Adrenal gland (tissue), 19 donors: ENCODE measurements at regions of chr3 and their contacts with region 1.

Region 1: GRCh38 chr3:170811928-170812591 is 57.9 kb downstream of the RPL22L1 start:
- DNase-seq: peak; percentile 59 to 86 (median 76)
- H3K4me3 ChIP-seq: no peak overlapping the region
- H3K27ac ChIP-seq: no peak overlapping the region
- H3K4me1 ChIP-seq: peaks cover 0 to 7% of the 10 kb centered on the region in 2 donors
- H3K27me3 ChIP-seq: no peaks in the 10 kb centered on the region
- CTCF ChIP-seq: peak; percentile 92 to 99 (median 94)
- POLR2A ChIP-seq: no peak

Region 2: GRCh38 chr3:170317954-170318353 is 494.1 kb before region 1 on chr3:
- intact Hi-C with region 1: loop called in 1 of 2 experiments (anchors 10 kb)
- DNase-seq: no peak
- H3K4me3 ChIP-seq: no peak overlapping the region
- H3K27ac ChIP-seq: no peak overlapping the region
- H3K4me1 ChIP-seq: no peaks in the 10 kb centered on the region
- H3K27me3 ChIP-seq: no peaks in the 10 kb centered on the region
- CTCF ChIP-seq: no peak
- POLR2A ChIP-seq: no peak

Region 3: GRCh38 chr3:170689893-170690660 is 122.0 kb before region 1 on chr3:
- intact Hi-C with region 1: loop called (anchors 5 kb)
- DNase-seq: peak; percentile 46 to 84 (median 73)
- H3K4me3 ChIP-seq: no peak overlapping the region
- H3K27ac ChIP-seq: no peak overlapping the region
- H3K4me1 ChIP-seq: no peaks in the 10 kb centered on the region
- H3K27me3 ChIP-seq: no peaks in the 10 kb centered on the region
- CTCF ChIP-seq: peak; percentile 57 to 86 (median 69)
- POLR2A ChIP-seq: no peak

Region 4: DNA sequence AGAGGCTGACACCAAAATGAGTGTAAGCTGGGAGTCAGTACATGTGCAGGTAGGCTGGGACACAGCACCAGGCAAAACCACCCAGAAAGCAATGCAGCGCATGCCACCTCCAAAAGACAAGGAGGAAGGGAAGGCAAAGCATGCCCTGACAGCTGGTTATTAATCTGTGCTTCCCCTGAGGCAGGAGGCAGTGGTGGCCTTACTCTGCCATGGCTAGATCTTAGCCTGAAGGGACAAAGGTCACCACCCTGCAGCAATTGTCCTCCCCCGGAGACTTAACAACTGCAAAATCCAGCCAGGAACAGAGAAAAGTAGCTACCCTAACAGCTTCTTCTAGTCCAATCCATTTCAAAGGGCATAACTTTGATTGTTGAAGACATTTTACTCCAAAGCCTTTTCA is 924.5 kb after region 1 on chr3:
- intact Hi-C with region 1: no loop called
- DNase-seq: no peak
- H3K4me3 ChIP-seq: no peak overlapping the region
- H3K27ac ChIP-seq: peak overlapping the region in 1 of 5 donors; percentile 9
- H3K4me1 ChIP-seq: peaks cover 10 to 30% of the 10 kb centered on the region in 2 donors
- H3K27me3 ChIP-seq: no peaks in the 10 kb centered on the region
- CTCF ChIP-seq: no peak
- POLR2A ChIP-seq: no peak